T-cell (primary cell): ENCODE measurements at regions of chr14 and their contacts with region 1.

Region 1: GRCh38 chr14:51846631-51847488 is 13.6 kb upstream of the GNG2 start:
- DNase-seq: peak; percentile 58 to 97 (median 88)
- ATAC-seq: peak; percentile 82 to 92 (median 90)
- H3K4me3 ChIP-seq: peak overlapping the region; percentile 60 to 62
- H3K4me3 Mint-ChIP-seq: peak overlapping the region; percentile 82 to 89 (median 82)
- H3K27ac ChIP-seq: peak overlapping the region; percentile 100
- H3K27ac Mint-ChIP-seq: peak overlapping the region; percentile 99
- H3K4me1 ChIP-seq: peaks cover 23 to 45% of the 10 kb centered on the region in 2 experiments
- H3K4me1 Mint-ChIP-seq: peaks cover 65 to 76% (median 66%) of the 10 kb centered on the region in 3 donors
- H3K27me3 ChIP-seq: no peaks in the 10 kb centered on the region
- H3K27me3 Mint-ChIP-seq: no peaks in the 10 kb centered on the region

Region 2: GRCh38 chr14:51445001-51445390 is 401.9 kb before region 1 on chr14:
- CTCF ChIA-PET with region 1: no interaction called
- POLR2A ChIA-PET with region 1: interaction called in 1 of 2 experiments, 14 read pairs
- DNase-seq: no peak
- ATAC-seq: no peak
- H3K4me3 ChIP-seq: no peak overlapping the region
- H3K4me3 Mint-ChIP-seq: no peak overlapping the region
- H3K27ac ChIP-seq: no peak overlapping the region
- H3K27ac Mint-ChIP-seq: no peak overlapping the region
- H3K4me1 ChIP-seq: no peaks in the 10 kb centered on the region
- H3K4me1 Mint-ChIP-seq: no peaks in the 10 kb centered on the region
- H3K27me3 ChIP-seq: no peaks in the 10 kb centered on the region
- H3K27me3 Mint-ChIP-seq: peaks cover 18 to 38% of the 10 kb centered on the region in 2 donors

Region 3: DNA sequence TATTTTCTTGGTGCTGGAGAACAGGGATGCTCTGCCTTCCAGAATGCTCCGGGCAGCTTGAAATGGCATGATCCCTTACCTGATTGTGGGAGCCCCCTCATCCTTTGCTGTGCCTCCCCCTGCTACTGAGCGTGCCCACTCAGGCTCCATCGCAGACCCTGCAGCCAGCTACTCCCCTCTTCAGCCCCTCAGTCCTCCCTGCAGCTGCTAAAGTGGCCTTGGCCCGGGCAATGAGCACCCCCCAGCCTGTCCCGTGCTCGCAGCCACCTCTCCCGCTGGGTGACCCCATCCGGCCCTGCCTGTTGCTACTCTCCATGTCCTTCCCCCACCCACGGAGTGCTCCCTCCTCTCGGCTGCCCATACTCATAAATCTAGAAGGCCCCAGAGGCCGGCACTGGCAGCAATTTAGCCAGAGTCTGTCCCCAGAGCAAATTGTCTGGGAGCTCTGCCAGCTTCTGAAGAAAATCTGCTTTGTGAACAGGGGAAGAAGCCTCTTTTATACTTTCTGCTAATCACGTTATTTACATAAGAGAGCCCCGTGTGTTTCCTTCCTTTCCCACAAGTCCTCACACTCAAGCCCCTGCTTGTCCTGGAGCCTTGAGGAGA is 338.9 kb before region 1 on chr14:
- CTCF ChIA-PET with region 1: no interaction called
- POLR2A ChIA-PET with region 1: no interaction called
- DNase-seq: no peak
- ATAC-seq: no peak
- H3K4me3 ChIP-seq: no peak overlapping the region
- H3K4me3 Mint-ChIP-seq: no peak overlapping the region
- H3K27ac ChIP-seq: no peak overlapping the region
- H3K27ac Mint-ChIP-seq: no peak overlapping the region
- H3K4me1 ChIP-seq: no peaks in the 10 kb centered on the region
- H3K4me1 Mint-ChIP-seq: no peaks in the 10 kb centered on the region
- H3K27me3 ChIP-seq: peaks cover 0 to 17% of the 10 kb centered on the region in 2 experiments
- H3K27me3 Mint-ChIP-seq: peaks cover 28 to 31% of the 10 kb centered on the region in 2 donors

Region 4: GRCh38 chr14:51744372-51745130 is 102.3 kb before region 1 on chr14:
- CTCF ChIA-PET with region 1: no interaction called
- POLR2A ChIA-PET with region 1: no interaction called
- DNase-seq: no peak
- ATAC-seq: no peak
- H3K4me3 ChIP-seq: no peak overlapping the region
- H3K4me3 Mint-ChIP-seq: no peak overlapping the region
- H3K27ac ChIP-seq: no peak overlapping the region
- H3K27ac Mint-ChIP-seq: no peak overlapping the region
- H3K4me1 ChIP-seq: no peaks in the 10 kb centered on the region
- H3K4me1 Mint-ChIP-seq: no peaks in the 10 kb centered on the region
- H3K27me3 ChIP-seq: no peaks in the 10 kb centered on the region
- H3K27me3 Mint-ChIP-seq: peaks cover 5 to 7% of the 10 kb centered on the region in 2 donors

Region 5: GRCh38 chr14:51834240-51834639 is 12.6 kb before region 1 on chr14:
- CTCF ChIA-PET with region 1: interaction called in 1 of 2 experiments, 11 read pairs
- POLR2A ChIA-PET with region 1: no interaction called
- DNase-seq: no peak
- ATAC-seq: no peak
- H3K4me3 ChIP-seq: no peak overlapping the region
- H3K4me3 Mint-ChIP-seq: no peak overlapping the region
- H3K27ac ChIP-seq: no peak overlapping the region
- H3K27ac Mint-ChIP-seq: no peak overlapping the region
- H3K4me1 ChIP-seq: no peaks in the 10 kb centered on the region
- H3K4me1 Mint-ChIP-seq: peaks cover 0 to 2% (median 0%) of the 10 kb centered on the region in 3 donors
- H3K27me3 ChIP-seq: no peaks in the 10 kb centered on the region
- H3K27me3 Mint-ChIP-seq: no peaks in the 10 kb centered on the region

Region 6: GRCh38 chr14:51860164-51860824 is 13.4 kb after region 1 on chr14 and contains the start of gene GNG2:
- CTCF ChIA-PET with region 1: interaction called in 1 of 2 experiments, 44 read pairs
- POLR2A ChIA-PET with region 1: interaction called, 7 to 152 read pairs
- DNase-seq: peak; percentile 66 to 92 (median 82)
- ATAC-seq: peak; percentile 97 to 99 (median 99)
- H3K4me3 ChIP-seq: peak within 1 kb of the TSS; percentile 79 to 97
- H3K4me3 Mint-ChIP-seq: peak within 1 kb of the TSS; percentile 95 to 96 (median 96)
- H3K27ac ChIP-seq: peak within 1 kb of the TSS; percentile 94
- H3K27ac Mint-ChIP-seq: peak within 1 kb of the TSS; percentile 96 to 97
- H3K4me1 ChIP-seq: peaks cover 33 to 56% of the 10 kb centered on the region in 2 experiments
- H3K4me1 Mint-ChIP-seq: peaks cover 58 to 94% (median 64%) of the 10 kb centered on the region in 3 donors
- H3K27me3 ChIP-seq: no peaks in the 10 kb centered on the region
- H3K27me3 Mint-ChIP-seq: no peaks in the 10 kb centered on the region
- total RNA-seq, gene GNG2: 82.2 to 197 (median 99.0) TPM

Region 7: DNA sequence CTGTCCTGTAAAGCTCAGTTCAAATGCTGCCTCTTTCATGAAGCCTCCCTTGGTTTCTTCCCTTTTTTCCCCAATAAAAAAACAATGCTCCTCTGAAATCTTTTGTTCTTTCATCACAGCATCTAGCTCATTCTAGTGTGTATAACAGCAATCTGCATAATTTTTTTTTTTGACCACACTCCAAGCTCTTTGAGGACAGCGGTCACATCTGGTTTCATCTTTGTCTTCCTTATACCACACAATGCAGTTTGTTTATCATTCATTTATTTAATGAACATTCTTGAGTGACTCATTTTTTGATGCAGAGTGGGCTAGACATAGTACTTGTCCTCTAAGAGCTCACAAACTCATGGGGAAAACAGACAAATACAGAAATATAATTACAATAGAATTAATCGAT is 20.9 kb after region 1 on chr14:
- CTCF ChIA-PET with region 1: interaction called in 1 of 2 experiments, 44 read pairs
- POLR2A ChIA-PET with region 1: interaction called, 7 to 152 read pairs
- DNase-seq: peak in 1 of 35 experiments; percentile 54
- ATAC-seq: peak in 3 of 4 experiments; percentile 28 to 51 (median 35)
- H3K4me3 ChIP-seq: no peak overlapping the region
- H3K4me3 Mint-ChIP-seq: no peak overlapping the region
- H3K27ac ChIP-seq: peak overlapping the region; percentile 76
- H3K27ac Mint-ChIP-seq: no peak overlapping the region
- H3K4me1 ChIP-seq: peaks cover 54 to 71% of the 10 kb centered on the region in 2 experiments
- H3K4me1 Mint-ChIP-seq: peaks cover 37 to 44% (median 44%) of the 10 kb centered on the region in 3 donors
- H3K27me3 ChIP-seq: no peaks in the 10 kb centered on the region
- H3K27me3 Mint-ChIP-seq: no peaks in the 10 kb centered on the region

Region 8: GRCh38 chr14:51884086-51884927 is 37.4 kb after region 1 on chr14:
- CTCF ChIA-PET with region 1: interaction called in 1 of 2 experiments, 9 read pairs
- POLR2A ChIA-PET with region 1: interaction called, 3 to 10 read pairs
- DNase-seq: peak in 1 of 35 experiments; percentile 10
- ATAC-seq: peak; percentile 46 to 66 (median 54)
- H3K4me3 ChIP-seq: no peak overlapping the region
- H3K4me3 Mint-ChIP-seq: peak overlapping the region; percentile 29 to 50 (median 43)
- H3K27ac ChIP-seq: peak overlapping the region; percentile 32
- H3K27ac Mint-ChIP-seq: peak overlapping the region; percentile 82 to 86
- H3K4me1 ChIP-seq: peaks cover 33 to 42% of the 10 kb centered on the region in 2 experiments
- H3K4me1 Mint-ChIP-seq: peaks cover 89 to 92% (median 90%) of the 10 kb centered on the region in 3 donors
- H3K27me3 ChIP-seq: no peaks in the 10 kb centered on the region
- H3K27me3 Mint-ChIP-seq: no peaks in the 10 kb centered on the region

Region 9: GRCh38 chr14:51901475-51902024 is 54.7 kb after region 1 on chr14:
- CTCF ChIA-PET with region 1: interaction called in 1 of 2 experiments, 6 read pairs
- POLR2A ChIA-PET with region 1: interaction called, 5 to 17 read pairs
- DNase-seq: peak in 21 of 35 experiments; percentile 7 to 59 (median 25)
- ATAC-seq: peak; percentile 71 to 90 (median 77)
- H3K4me3 ChIP-seq: no peak overlapping the region
- H3K4me3 Mint-ChIP-seq: peak overlapping the region in 1 of 3 donors; percentile 29
- H3K27ac ChIP-seq: no peak overlapping the region
- H3K27ac Mint-ChIP-seq: peak overlapping the region; percentile 58 to 76
- H3K4me1 ChIP-seq: peaks cover 10 to 27% of the 10 kb centered on the region in 2 experiments
- H3K4me1 Mint-ChIP-seq: peaks cover 68 to 85% (median 80%) of the 10 kb centered on the region in 3 donors
- H3K27me3 ChIP-seq: no peaks in the 10 kb centered on the region
- H3K27me3 Mint-ChIP-seq: no peaks in the 10 kb centered on the region